ENCODE measurements at regions of chr3 and their contacts with region 1.

Region 1: DNA sequence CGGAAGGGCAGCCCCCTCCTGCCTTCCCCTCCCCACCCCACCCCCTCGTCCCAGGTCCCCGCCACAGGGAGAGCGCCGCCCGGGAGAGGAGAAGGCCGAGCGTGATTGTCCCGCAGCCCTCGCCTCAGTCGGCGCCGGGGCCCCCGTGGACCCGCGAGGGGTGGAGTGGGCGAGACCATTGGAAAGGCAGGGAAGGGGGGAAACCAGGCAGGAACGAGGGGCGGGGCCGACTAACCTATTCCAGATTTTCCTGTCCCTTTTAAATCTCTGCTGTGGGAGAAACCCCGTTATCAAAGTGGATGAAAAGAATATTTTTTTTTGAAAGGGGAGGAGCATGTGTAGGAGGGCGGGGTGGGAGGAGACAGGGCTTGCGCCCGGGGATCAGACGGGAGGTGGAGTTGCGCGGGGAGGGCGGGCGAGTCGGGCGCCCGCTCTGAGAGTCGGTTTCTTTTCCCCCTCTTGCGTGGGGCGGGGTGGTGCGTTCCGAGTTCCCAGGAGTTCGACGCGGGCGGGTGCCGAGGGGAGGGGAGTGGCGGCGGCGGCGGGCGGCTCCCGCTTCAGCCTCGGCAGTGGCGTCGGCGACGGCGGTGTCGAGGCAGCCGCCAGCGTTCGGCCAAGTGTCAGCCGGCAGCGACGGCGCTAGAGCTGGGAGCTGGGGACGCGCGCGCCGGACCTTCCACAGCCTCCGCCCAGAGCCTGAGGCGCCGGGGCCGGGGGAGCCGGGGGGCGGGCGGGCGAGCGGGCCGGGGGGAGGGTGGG is at the start of gene NECTIN3:
- DNase-seq: peak; percentile 86
- ATAC-seq: peak; percentile 88
- H3K4me3 ChIP-seq: peak within 1 kb of the TSS; percentile 35 to 68 (median 52)
- H3K4me3 Mint-ChIP-seq: peak within 1 kb of the TSS; percentile 93
- H3K27ac ChIP-seq: no peak within 1 kb of the TSS
- H3K27ac Mint-ChIP-seq: peak within 1 kb of the TSS; percentile 64
- H3K4me1 ChIP-seq: peaks cover 25 to 27% of the 10 kb centered on the region in 2 donors
- H3K4me1 Mint-ChIP-seq: peaks cover 30% of the 10 kb centered on the region
- H3K27me3 ChIP-seq: peaks cover 0 to 46% (median 39%) of the 10 kb centered on the region in 4 experiments
- H3K27me3 Mint-ChIP-seq: peaks cover 42% of the 10 kb centered on the region
- CTCF ChIP-seq: no peak
- total RNA-seq, gene NECTIN3: 1.9 and 2.9 TPM in 2 replicates

Region 2: DNA sequence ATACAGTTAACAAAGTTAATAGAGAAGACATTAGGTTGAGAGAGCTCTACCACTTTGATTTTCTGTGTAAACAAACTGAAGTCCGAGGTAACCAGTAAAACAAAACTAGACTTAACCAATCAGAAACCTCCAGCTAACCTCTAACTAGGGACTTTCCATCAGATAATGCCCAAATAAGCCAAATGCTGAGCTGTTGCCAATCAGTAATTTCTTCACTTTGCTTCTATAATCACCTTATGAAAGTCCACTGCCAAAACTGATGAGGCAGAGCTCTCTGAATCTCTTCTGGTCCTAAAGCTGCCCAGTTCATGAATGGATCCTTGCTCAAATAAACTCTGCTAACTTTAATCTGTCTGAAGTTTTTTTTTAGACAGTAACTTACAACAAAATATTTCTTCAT is 447.9 kb before region 1 on chr3:
- CTCF ChIA-PET with region 1: no interaction called
- POLR2A ChIA-PET with region 1: no interaction called
- intact Hi-C with region 1: loop called (anchors 10 kb)
- DNase-seq: no peak
- ATAC-seq: no peak
- H3K4me3 ChIP-seq: no peak overlapping the region
- H3K4me3 Mint-ChIP-seq: no peak overlapping the region
- H3K27ac ChIP-seq: no peak overlapping the region
- H3K27ac Mint-ChIP-seq: no peak overlapping the region
- H3K4me1 ChIP-seq: peaks cover 0 to 6% of the 10 kb centered on the region in 2 donors
- H3K4me1 Mint-ChIP-seq: peaks cover 3% of the 10 kb centered on the region
- H3K27me3 ChIP-seq: no peaks in the 10 kb centered on the region
- H3K27me3 Mint-ChIP-seq: no peaks in the 10 kb centered on the region
- CTCF ChIP-seq: no peak

Measured in B cell (primary cell).